ENCODE measurements at regions of chrX and their contacts with region 1.

Region 1: DNA sequence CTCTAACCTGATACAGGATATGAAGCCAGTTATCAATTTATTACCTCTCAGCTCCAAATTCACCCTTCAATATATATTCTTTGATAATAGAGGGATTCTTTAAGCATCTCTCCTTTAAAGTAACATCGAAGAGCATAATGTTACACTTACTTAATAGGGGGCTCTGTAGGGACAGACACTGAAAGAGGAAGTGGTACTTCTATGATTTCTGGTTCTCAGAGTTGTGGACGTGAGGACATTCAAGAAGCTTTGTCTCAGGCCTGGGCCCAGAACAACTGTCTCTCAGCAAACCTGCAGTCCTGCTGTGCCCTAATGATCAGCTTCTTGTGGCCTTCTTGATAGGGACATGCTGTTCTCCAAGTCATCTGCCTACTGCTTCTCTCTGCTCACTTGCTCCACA is 4.2 kb upstream of the ZXDB start:
- DNase-seq: no peak
- ATAC-seq: no peak
- H3K4me3 ChIP-seq: no peak overlapping the region
- H3K27ac ChIP-seq: no peak overlapping the region
- H3K4me1 ChIP-seq: no peaks in the 10 kb centered on the region
- H3K27me3 ChIP-seq: peaks cover 0 to 7% (median 0%) of the 10 kb centered on the region in 3 donors
- CTCF ChIP-seq: no peak

Region 2: DNA sequence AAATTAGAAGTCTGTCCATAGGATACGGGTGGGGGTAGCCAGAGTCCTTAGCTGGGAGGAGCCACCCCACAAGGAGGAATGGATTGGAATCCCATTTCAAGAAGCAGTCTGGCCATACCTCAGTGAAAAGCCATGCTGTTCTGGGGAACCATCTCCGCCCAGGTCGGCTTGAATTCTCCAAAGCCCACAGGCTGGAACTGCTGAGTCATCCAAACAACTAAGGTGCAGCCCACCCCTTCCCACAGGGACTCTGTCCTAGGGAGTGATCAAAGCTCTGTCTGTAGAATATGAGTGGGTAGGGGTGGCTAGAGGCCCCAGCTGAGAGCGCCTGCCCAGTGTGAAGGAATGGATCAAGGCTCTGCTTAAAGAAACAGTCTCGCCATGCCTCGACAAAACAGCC is 283.9 kb after region 1 on chrX:
- intact Hi-C with region 1: no loop called
- DNase-seq: no peak
- ATAC-seq: no peak
- H3K4me3 ChIP-seq: no peak overlapping the region
- H3K27ac ChIP-seq: no peak overlapping the region
- H3K4me1 ChIP-seq: peaks cover 2% of the 10 kb centered on the region
- H3K27me3 ChIP-seq: peaks cover 0 to 6% (median 0%) of the 10 kb centered on the region in 3 donors
- CTCF ChIP-seq: no peak

Region 3: DNA sequence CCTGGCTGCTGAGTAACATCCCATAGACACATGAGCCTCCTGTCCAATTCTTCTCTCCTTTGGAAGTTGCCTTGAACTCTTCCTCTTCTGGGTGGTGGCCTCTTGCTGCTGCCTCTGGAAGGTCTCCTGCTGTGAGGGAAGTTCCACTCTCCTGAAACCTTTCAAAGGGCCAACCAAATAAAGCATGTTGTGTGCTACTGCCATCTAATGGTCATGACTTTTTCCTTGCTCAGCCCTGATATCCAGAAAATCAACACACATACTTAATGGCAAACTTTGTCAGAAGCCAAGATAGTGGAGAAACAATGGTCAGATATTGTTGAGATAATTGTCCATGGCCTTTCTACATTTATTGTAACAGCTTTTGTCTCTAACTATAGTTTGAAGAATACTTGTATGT is 341.8 kb after region 1 on chrX:
- intact Hi-C with region 1: loop called in 1 of 2 experiments (anchors 10 kb)
- DNase-seq: no peak
- ATAC-seq: peak in 3 of 4 donors; percentile 48 to 67 (median 60)
- H3K4me3 ChIP-seq: no peak overlapping the region
- H3K27ac ChIP-seq: no peak overlapping the region
- H3K4me1 ChIP-seq: no peaks in the 10 kb centered on the region
- H3K27me3 ChIP-seq: no peaks in the 10 kb centered on the region
- CTCF ChIP-seq: peak; percentile 55